ENCODE measurements at regions of chr13 and their contacts with region 1.

Region 1: DNA sequence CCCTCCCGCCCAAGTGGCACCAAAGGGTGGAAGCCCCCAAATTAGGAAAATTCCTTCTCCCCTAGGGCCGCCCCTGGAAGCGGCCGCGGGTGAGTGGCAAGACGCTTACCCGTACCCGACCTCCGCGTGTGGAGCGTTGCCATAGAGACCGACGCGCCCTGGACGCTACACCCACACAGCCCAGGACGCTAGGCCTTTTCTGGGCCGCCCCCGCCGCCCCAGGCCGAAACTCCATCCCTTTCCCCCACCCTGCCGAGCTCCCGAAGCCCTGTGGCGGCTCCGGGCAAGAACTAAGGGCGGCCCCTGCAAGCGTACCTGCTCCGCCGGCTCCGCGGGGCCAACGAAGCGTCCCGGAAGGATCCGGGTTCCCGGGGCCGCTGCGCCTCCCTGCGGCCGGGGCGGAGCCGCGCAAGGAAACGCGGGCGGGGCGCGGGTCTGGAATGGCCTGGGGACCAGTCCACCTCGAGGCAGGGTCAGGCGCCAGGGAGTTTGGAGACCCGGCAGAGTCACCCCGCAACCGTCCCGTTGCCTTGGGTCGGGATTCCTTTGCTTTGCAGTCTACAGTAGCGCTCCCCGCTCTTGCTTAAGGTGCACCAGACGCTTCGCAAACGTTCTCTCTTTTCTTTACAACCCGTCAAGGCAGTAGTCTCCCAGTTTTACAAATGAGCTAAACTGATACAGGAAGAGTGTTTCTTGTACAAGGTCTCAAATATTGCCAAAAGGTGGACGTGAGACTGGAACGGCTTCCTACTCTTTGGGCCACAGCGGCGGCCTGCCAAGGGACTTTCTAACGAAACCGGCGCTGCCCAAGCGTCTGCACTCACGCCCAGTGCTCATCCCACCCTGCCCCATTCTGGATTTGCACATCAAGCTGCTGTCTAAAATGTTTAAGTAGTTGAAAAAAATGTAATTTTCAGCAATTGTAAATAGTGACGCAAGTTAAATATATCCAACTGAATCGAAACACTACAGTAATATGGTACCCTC is at the start of gene NEK5:
- DNase-seq: peak; percentile 70
- H3K4me3 ChIP-seq: peak within 1 kb of the TSS; percentile 50 to 74 (median 64)
- H3K27ac ChIP-seq: peak within 1 kb of the TSS; percentile 10 to 65 (median 58)
- H3K4me1 ChIP-seq: peaks cover 0 to 22% (median 20%) of the 10 kb centered on the region in 4 donors
- H3K27me3 ChIP-seq: no peaks in the 10 kb centered on the region
- CTCF ChIP-seq: peak in 3 of 4 experiments; percentile 64 to 77 (median 71)
- EP300 ChIP-seq: no peak
- POLR2A ChIP-seq: no peak
- total RNA-seq, gene NEK5: 0.27 to 0.83 (median 0.33) TPM in 3 of 4 donors, not detected in the other

Region 2: DNA sequence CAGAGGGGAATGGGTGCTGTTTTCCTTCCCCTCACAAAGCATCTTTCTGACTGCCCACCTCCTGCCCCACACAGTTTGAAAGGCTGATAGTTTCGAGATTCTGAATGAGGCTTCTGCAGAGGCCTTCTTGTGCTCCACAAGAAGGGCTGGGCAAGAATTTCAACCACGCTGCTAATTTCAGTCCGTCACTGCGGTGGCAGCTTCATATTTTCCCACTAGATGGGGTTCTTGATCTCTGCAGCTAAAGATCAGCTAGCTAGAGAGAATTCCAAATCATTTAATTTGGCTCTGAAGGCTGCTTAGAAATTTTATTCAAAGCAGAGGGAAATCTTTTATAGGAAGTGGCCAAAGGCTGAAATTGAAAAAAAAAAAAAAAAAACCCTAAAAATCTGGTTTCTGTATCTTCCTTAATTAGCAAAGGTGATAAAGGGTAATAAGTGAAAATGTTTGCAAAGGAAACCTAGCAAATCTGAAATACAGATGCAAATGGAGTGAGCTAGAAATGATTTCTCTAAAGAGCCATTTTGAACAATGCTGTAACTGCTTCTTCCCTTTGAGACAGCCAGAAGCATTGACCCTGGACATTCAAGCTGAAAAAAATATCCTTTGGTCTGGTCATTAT is 979.9 kb before region 1 on chr13:
- intact Hi-C with region 1: loop called (anchors 10 kb)
- DNase-seq: no peak
- H3K4me3 ChIP-seq: no peak overlapping the region
- H3K27ac ChIP-seq: peak overlapping the region in 1 of 4 donors; percentile 32
- H3K4me1 ChIP-seq: peaks cover 0 to 3% (median 0%) of the 10 kb centered on the region in 4 donors
- H3K27me3 ChIP-seq: no peaks in the 10 kb centered on the region
- CTCF ChIP-seq: peak; percentile 20 to 56 (median 46)
- EP300 ChIP-seq: no peak
- POLR2A ChIP-seq: no peak

Region 3: DNA sequence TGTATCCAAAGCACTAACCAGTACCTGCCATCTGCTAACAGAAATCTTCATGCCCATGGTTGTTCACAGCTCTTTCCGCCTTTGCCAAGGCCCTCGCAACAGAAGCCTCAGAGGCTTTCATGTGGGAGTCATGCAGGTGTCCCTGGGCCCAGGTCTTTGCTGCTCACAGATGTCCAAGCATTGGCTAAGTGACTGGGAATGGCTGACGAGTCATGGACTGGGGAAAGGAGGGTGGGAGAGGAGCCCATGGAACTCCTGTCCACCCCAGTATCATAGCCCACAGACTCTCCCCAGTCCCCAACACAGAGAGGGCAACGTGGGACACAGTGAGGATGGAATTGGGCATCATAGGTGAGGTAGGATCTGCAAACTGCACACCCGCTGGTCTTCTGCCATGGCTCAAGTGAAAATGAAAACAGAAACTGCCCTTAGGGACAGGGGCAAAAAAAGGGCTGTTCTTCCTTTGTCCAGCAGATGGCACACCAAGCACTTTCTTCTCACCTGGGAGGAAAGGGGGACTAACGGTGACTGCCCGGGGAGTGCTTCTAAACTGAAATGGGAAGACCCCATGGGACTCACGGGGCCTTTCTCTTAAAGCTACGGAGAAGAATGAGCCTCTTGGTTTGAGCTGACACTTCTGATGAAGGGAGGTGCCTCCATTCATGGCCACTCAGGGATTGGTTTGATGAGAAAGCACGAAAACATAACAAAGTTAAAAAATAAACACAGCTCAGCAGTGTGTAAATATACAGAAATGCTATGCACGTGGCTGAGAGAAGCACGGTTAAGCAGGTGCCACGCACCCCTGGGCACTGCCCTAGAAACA is 314.0 kb before region 1 on chr13:
- intact Hi-C with region 1: loop called (anchors 5 kb)
- DNase-seq: peak; percentile 78
- H3K4me3 ChIP-seq: peak overlapping the region; percentile 6 to 25 (median 18)
- H3K27ac ChIP-seq: no peak overlapping the region
- H3K4me1 ChIP-seq: peaks cover 0 to 23% (median 15%) of the 10 kb centered on the region in 4 donors
- H3K27me3 ChIP-seq: no peaks in the 10 kb centered on the region
- CTCF ChIP-seq: peak; percentile 75 to 83 (median 79)
- EP300 ChIP-seq: no peak
- POLR2A ChIP-seq: no peak

Region 4: GRCh38 chr13:51895906-51896888 is 232.8 kb before region 1 on chr13:
- intact Hi-C with region 1: loop called (anchors 5 kb)
- DNase-seq: no peak
- H3K4me3 ChIP-seq: no peak overlapping the region
- H3K27ac ChIP-seq: no peak overlapping the region
- H3K4me1 ChIP-seq: no peaks in the 10 kb centered on the region
- H3K27me3 ChIP-seq: no peaks in the 10 kb centered on the region
- CTCF ChIP-seq: peak in 2 of 4 experiments; percentile 43 to 51
- EP300 ChIP-seq: no peak
- POLR2A ChIP-seq: no peak

Region 5: GRCh38 chr13:51921790-51922740 is 206.9 kb before region 1 on chr13:
- intact Hi-C with region 1: no loop called
- DNase-seq: no peak
- H3K4me3 ChIP-seq: no peak overlapping the region
- H3K27ac ChIP-seq: no peak overlapping the region
- H3K4me1 ChIP-seq: no peaks in the 10 kb centered on the region
- H3K27me3 ChIP-seq: no peaks in the 10 kb centered on the region
- CTCF ChIP-seq: no peak
- EP300 ChIP-seq: no peak
- POLR2A ChIP-seq: no peak

Region 6: GRCh38 chr13:52001120-52001731 is 127.8 kb before region 1 on chr13:
- intact Hi-C with region 1: loop called (anchors 2 kb)
- DNase-seq: no peak
- H3K4me3 ChIP-seq: no peak overlapping the region
- H3K27ac ChIP-seq: no peak overlapping the region
- H3K4me1 ChIP-seq: peaks cover 0 to 29% (median 23%) of the 10 kb centered on the region in 4 donors
- H3K27me3 ChIP-seq: no peaks in the 10 kb centered on the region
- CTCF ChIP-seq: peak; percentile 7 to 74 (median 54)
- EP300 ChIP-seq: no peak
- POLR2A ChIP-seq: no peak